ENCODE measurements at regions of chr16 and their contacts with region 1.

Region 1: DNA sequence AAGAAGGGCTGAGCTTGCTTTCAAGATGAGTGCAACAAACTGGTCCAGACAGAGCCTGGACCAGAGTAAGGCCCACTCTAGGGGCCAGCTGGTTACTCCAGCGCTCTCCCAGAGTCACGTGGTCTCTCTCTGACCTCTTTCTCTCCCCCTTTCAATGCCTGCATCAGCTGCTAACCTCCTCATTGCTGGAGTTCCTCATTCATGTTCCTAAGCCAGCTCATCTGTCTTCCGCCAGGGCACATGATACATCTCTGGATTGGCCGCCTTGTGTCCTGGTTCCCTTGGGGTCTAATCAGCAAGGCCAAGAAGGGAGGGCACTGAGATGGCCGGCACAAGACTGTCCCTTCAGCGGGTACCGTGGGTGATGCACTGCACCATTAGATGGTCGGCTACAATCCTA is 26.9 kb upstream of the ZFP90 start:
- DNase-seq: no peak
- H3K27ac ChIP-seq: no peak overlapping the region
- CTCF ChIP-seq: no peak

Region 2: GRCh38 chr16:68396481-68396880 is 115.7 kb before region 1 on chr16:
- CTCF ChIA-PET with region 1: interaction called, 25 read pairs
- POLR2A ChIA-PET with region 1: no interaction called
- DNase-seq: peak; percentile 54
- H3K27ac ChIP-seq: no peak overlapping the region
- CTCF ChIP-seq: no peak; the same call in 1 of the 2 replicates

Region 3: GRCh38 chr16:68444056-68444657 is 68.0 kb before region 1 on chr16:
- CTCF ChIA-PET with region 1: interaction called, 11 read pairs
- POLR2A ChIA-PET with region 1: no interaction called
- DNase-seq: peak; percentile 49
- H3K27ac ChIP-seq: no peak overlapping the region
- CTCF ChIP-seq: no peak